ENCODE measurements at regions of chr9 and their contacts with region 1.

Region 1: GRCh38 chr9:101530077-101530711 is 3.5 kb upstream of the RNF20 start:
- DNase-seq: peak; percentile 62
- H3K4me3 Mint-ChIP-seq: no peak overlapping the region
- H3K27ac Mint-ChIP-seq: no peak overlapping the region
- H3K4me1 Mint-ChIP-seq: peaks cover 11% of the 10 kb centered on the region
- H3K27me3 Mint-ChIP-seq: no peaks in the 10 kb centered on the region

Region 2: GRCh38 chr9:100838857-100839256 is 691.3 kb before region 1 on chr9:
- intact Hi-C with region 1: no loop called
- DNase-seq: no peak
- H3K4me3 Mint-ChIP-seq: no peak overlapping the region
- H3K27ac Mint-ChIP-seq: no peak overlapping the region
- H3K4me1 Mint-ChIP-seq: no peaks in the 10 kb centered on the region
- H3K27me3 Mint-ChIP-seq: no peaks in the 10 kb centered on the region

Region 3: DNA sequence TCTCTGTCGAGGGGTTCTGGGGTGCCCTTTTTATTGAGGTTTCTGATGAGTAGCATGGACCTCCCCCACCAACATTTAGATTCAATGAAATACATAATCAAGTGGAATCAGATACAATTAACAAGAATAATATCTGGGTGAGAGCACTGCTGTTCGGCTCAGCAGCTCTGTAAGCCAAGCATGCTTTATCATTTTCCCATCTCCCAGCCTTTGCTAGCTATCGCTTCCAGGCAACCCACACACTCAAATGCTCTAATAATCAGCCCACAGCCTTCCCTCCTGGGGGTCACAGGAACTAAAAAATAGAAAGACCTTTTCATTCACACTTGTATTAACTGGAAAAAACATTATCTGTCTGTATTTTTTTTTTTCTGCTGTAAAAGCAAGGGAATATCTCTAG is 492.8 kb before region 1 on chr9:
- intact Hi-C with region 1: no loop called
- DNase-seq: no peak
- H3K4me3 Mint-ChIP-seq: no peak overlapping the region
- H3K27ac Mint-ChIP-seq: no peak overlapping the region
- H3K4me1 Mint-ChIP-seq: no peaks in the 10 kb centered on the region
- H3K27me3 Mint-ChIP-seq: peaks cover 6% of the 10 kb centered on the region

Region 4: GRCh38 chr9:101119206-101119819 is 410.9 kb before region 1 on chr9:
- intact Hi-C with region 1: loop called (anchors 10 kb)
- DNase-seq: no peak
- H3K4me3 Mint-ChIP-seq: no peak overlapping the region
- H3K27ac Mint-ChIP-seq: no peak overlapping the region
- H3K4me1 Mint-ChIP-seq: no peaks in the 10 kb centered on the region
- H3K27me3 Mint-ChIP-seq: no peaks in the 10 kb centered on the region

Region 5: GRCh38 chr9:101398068-101398929 is 131.9 kb before region 1 on chr9 and contains the starts of genes MRPL50 and ZNF189:
- intact Hi-C with region 1: loop called (anchors 1 kb)
- DNase-seq: peak; percentile 95
- H3K4me3 Mint-ChIP-seq: peak within 1 kb of the TSS; percentile 94
- H3K27ac Mint-ChIP-seq: peak within 1 kb of the TSS; percentile 96
- H3K4me1 Mint-ChIP-seq: peaks cover 41% of the 10 kb centered on the region
- H3K27me3 Mint-ChIP-seq: no peaks in the 10 kb centered on the region
- total RNA-seq, gene MRPL50: 14.2 and 14.8 TPM in 2 replicates
- total RNA-seq, gene ZNF189: 10.6 and 11.0 TPM in 2 replicates

Region 6: DNA sequence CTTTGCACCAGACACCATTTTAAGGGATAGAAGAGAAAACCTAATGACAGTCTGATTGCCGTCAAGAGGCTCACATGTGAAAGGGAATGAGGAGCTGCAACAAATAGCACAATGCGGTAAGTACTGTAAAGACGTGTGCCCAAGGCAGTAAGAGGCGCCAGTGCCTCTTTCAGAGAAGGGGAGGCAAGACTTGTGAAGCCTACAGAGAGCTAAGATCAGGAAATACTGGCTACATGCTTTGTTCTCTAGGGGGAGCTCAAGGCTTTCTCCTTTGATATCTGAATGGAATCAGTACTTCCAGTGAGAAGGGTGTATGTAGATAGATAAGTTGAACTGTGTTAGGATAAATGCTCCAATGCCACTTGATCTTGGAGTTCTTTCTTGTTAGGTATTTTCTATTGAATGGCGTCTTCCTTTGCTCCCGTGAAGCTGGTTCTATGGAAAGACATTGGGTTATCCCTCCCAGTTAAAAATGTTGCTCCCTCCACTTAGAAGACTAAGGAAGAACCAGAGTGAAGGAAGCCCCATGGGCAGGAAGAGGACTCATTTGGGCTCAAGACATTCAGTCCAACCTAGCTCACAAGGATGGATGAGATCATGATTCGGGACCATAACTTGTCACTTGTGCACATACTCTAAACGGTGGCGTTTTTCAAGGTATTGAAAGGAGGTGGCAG is 71.1 kb before region 1 on chr9:
- intact Hi-C with region 1: loop called (anchors 1 kb)
- DNase-seq: no peak
- H3K4me3 Mint-ChIP-seq: no peak overlapping the region
- H3K27ac Mint-ChIP-seq: no peak overlapping the region
- H3K4me1 Mint-ChIP-seq: no peaks in the 10 kb centered on the region
- H3K27me3 Mint-ChIP-seq: peaks cover 12% of the 10 kb centered on the region

Region 7: DNA sequence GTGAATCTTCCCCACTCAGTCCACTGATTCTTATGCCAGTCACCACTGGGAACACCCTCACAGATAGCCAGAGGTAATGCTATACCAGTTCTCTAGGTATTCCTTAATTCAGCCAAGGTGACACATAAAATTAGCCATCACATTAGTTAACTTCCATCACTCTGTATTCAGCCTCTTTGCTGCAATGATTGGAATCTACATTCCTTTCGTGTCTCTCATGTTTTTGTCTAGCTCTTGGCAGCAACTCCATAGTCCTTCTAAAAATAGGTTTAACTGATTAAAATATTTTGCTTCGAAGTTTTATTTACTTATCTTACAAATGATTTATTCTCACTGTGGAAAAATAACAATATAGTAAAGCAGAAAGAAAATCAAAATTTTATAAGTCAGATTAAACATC is 16.1 kb before region 1 on chr9:
- intact Hi-C with region 1: no loop called
- DNase-seq: no peak
- H3K4me3 Mint-ChIP-seq: no peak overlapping the region
- H3K27ac Mint-ChIP-seq: no peak overlapping the region
- H3K4me1 Mint-ChIP-seq: no peaks in the 10 kb centered on the region
- H3K27me3 Mint-ChIP-seq: peaks cover 13% of the 10 kb centered on the region

Region 8: GRCh38 chr9:101569741-101570501 is 39.7 kb after region 1 on chr9:
- intact Hi-C with region 1: no loop called
- DNase-seq: no peak
- H3K4me3 Mint-ChIP-seq: no peak overlapping the region
- H3K27ac Mint-ChIP-seq: no peak overlapping the region
- H3K4me1 Mint-ChIP-seq: peaks cover 19% of the 10 kb centered on the region
- H3K27me3 Mint-ChIP-seq: no peaks in the 10 kb centered on the region

Measured in activated T-helper 2 cell treated with anti-CD3 and anti-CD28 coated beads, Interferon-gamma antibody, Interleukin-2, Interleukin-4, amounts not matched to agents 10 μg/mL and 5 μg/mL and 100 μg/mL, durations not matched to agents 14 hours and 24 hours and 36 hours (primary cell).